ENCODE measurements at regions of chr5 and their contacts with region 1.

Region 1: GRCh38 chr5:131634996-131635754 is at the start of gene RAPGEF6:
- DNase-seq: peak; percentile 99
- H3K4me3 ChIP-seq: peak within 1 kb of the TSS; percentile 60 to 74
- H3K27ac ChIP-seq: peak within 1 kb of the TSS; percentile 97 to 98
- H3K4me1 ChIP-seq: peaks cover 3% of the 10 kb centered on the region
- H3K27me3 ChIP-seq: no peaks in the 10 kb centered on the region
- CTCF ChIP-seq: peak in 2 of 4 experiments; percentile 9 to 42
- POLR2A ChIP-seq: peak; percentile 88
- total RNA-seq, gene RAPGEF6: 15.5 to 43.0 TPM

Region 2: DNA sequence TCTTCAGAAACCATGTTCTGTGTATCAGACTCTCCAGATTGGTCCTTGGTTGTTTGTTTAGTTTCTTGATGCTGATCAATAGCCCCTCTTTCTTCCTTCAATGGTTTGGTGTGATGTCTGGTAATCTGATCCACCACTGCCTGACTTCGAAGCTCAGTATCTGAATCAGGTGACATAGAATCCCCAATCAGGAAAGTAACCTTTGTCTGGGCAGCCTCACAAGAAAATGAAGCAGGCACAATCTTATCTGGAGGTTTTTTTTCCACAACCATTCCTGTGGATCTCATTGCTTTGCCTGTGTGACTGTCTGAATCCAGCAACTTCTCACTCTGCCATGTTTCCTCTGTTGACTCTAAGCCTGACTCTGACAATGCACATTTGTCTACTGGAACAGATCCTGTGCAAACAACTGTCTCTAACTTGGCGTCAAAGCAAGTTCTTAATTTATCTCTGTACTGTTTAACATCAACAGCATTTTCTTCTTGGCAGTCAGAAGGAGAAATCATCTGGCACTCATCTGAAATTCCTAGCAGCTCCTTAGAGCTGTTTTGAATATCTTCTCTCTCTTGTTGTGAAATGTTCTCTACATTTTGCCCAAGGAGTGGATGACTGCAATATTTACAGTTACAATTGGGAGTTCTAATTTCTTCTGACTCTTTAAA is 37.0 kb after region 1 on chr5:
- intact Hi-C with region 1: loop called (anchors 5 kb)
- DNase-seq: peak; percentile 81
- H3K4me3 ChIP-seq: no peak overlapping the region
- H3K27ac ChIP-seq: peak overlapping the region; percentile 86 to 92
- H3K4me1 ChIP-seq: peaks cover 12% of the 10 kb centered on the region
- H3K27me3 ChIP-seq: no peaks in the 10 kb centered on the region
- CTCF ChIP-seq: no peak
- POLR2A ChIP-seq: no peak

Region 3: GRCh38 chr5:131796793-131797693 is 161.9 kb after region 1 on chr5 and contains the start of gene FNIP1:
- intact Hi-C with region 1: loop called (anchors 1 kb)
- DNase-seq: peak; percentile 100
- H3K4me3 ChIP-seq: peak within 1 kb of the TSS; percentile 96 to 97
- H3K27ac ChIP-seq: peak within 1 kb of the TSS; percentile 100
- H3K4me1 ChIP-seq: no peaks in the 10 kb centered on the region
- H3K27me3 ChIP-seq: no peaks in the 10 kb centered on the region
- CTCF ChIP-seq: peak in 1 of 4 experiments; percentile 21
- POLR2A ChIP-seq: peak; percentile 96
- total RNA-seq, gene FNIP1: 44.1 to 49.5 TPM

Region 4: DNA sequence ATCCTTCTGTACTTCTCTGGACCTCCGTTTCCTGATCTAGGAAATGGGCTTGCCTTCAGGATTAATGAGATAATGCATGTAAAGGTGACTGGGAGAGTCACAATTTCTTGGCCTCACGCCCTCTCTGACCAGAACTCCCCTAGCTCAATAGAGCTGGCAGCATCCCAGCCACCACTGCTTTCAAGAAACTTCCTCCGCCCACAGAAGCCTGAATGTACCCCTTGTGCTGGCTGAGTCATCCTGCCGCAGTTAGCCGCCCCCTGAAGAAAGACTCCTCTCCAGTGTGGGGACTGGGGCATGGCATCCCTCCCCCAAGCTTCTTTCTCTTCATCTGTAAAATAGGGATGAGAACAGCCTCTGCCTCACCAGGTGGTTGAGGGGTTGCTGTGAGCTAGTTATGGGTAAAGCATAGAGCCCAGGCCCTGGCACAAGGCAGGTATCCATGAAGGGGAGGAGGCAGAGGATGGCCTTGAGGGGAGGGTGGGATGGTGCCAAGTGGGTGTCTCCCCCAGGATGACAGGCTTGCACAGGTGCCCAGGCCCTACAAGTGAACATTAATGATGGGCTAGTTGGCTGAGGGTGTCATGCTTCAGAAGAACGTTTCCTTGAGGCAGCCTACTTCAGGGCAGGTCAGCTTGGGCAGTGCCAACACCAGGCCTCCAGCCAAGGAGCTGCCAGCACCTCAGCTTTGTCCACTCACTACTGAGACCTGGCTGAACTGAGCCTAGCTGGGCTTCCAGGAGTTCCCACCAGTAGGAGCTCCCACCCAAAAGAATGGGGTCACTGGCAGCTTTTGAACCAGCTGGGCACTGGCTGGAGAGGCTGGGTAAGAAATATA is 625.8 kb after region 1 on chr5:
- intact Hi-C with region 1: loop called (anchors 10 kb)
- DNase-seq: no peak
- H3K4me3 ChIP-seq: no peak overlapping the region
- H3K27ac ChIP-seq: peak overlapping the region; percentile 88 to 91
- H3K4me1 ChIP-seq: peaks cover 23% of the 10 kb centered on the region
- H3K27me3 ChIP-seq: no peaks in the 10 kb centered on the region
- CTCF ChIP-seq: no peak
- POLR2A ChIP-seq: no peak

Measured in prostate gland (tissue), 2 donors.